ENCODE measurements at regions of chr3 and their contacts with region 1.

Region 1: DNA sequence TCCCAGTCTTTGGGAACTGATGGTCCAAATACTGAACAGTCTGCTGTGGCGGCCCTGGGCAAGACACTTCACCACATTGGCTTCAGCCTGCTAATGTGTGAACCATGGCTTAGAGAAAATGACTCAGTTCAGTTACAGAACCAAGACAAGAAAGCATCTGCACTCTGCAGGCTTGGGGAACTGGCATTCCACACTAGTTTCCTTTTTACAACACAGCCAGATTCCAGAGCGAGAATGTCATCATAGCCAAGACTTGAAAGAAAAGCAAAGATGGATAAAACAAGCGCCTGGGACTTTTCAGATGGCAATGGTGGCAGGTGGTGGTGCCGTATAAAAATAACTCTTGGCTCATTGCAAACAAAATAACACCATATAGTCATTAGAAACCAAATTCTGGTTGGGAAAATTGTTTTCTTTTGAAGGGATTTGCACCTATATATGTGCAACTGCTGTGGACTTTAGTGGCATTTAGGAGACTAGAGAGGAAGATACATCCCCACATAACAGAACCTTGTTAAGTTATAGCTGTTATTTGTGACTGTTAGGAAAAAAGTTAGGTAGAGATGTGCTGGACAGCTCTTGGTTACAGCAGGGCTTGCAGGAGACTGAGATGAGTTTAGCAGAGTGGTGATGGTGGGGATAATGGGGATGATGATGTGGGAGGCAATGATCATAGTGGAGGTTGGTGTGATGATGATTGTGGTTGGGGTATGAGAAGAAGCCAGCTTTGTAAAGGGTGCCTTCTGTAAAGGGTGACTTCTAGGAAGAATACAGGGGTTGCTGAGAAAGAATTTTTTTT is 273.6 kb downstream of the THRB start:
- DNase-seq: peak; percentile 93
- H3K4me3 ChIP-seq: no peak overlapping the region
- H3K27me3 ChIP-seq: 0 out of 2 replicates have a peak, but pooled peaks cover under 1% of the 10 kb centered on the region
- CTCF ChIP-seq: no peak

Region 2: DNA sequence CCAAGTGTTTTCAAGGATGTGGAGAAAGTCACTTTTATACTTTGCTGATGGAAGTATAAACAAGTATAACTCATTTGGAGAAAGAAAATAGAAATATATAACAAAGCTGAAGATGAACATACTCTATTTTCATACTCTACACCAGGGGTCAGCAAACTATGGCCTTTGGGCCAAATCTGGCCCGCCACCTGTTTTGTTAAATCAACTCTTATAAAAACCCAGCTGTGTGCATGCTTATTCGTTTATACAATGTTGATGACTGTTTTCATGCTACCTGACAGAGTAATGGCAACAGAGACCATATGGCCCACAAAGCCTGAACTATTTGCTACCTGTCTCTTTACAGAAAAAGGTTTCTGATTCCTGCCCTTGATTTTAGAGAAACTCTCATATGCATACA is 152.0 kb before region 1 on chr3:
- CTCF ChIA-PET with region 1: no interaction called
- POLR2A ChIA-PET with region 1: no interaction called
- DNase-seq: no peak
- H3K4me3 ChIP-seq: no peak overlapping the region
- H3K27me3 ChIP-seq: no peaks in the 10 kb centered on the region
- CTCF ChIP-seq: peak; percentile 30

Region 3: GRCh38 chr3:24196526-24196925 is 24.5 kb before region 1 on chr3:
- CTCF ChIA-PET with region 1: no interaction called
- POLR2A ChIA-PET with region 1: interaction called, 14 read pairs
- DNase-seq: peak; percentile 77
- H3K4me3 ChIP-seq: no peak overlapping the region
- H3K27me3 ChIP-seq: no peaks in the 10 kb centered on the region
- CTCF ChIP-seq: no peak

Measured in BJ (cell line).